ENCODE measurements at regions of chr14 and their contacts with region 1.

Region 1: DNA sequence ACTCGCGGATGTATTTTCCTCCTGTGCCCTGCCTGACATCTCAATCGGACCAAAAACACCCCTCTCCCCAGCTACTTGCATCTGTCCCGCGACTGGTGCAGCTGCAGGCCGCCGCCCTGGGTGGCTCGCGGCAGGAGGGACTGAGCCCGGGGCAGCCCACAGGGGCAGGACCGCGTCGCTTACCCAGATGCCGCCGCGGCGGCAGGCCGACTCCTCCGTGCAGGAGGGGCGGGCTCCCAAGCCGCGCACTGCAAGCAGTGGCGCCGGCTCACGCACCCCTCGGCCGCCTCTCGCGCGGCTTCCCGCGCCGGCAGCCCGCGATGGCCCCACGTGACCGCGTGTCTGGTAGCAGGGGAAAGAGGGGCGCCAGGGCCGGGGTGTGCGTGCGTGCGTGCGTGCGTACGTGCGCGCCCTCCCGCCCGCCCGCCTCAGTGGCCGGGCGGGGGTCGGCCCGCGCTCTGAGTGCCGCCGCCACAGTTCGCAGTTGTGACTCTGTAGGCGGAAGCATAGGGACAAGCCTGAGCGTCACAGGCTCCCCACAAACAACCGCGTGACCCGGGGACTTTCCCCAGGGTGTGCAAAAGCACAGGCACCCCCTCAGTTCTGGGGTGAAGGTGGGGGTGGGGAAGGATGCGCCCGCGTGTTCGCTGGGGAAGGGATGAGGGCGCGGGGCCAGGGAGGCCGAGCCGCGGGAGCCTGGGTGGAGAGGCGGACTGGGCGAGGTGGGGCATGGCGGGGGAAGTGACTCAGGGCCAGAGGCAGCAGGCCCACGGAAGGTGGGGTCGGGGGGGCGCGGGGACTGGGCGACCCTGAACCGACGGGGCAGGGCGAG is at the start of gene ZBTB25:
- DNase-seq: peak; percentile 91 to 100 (median 94)
- ATAC-seq: peak; percentile 64
- H3K4me3 ChIP-seq: peak within 1 kb of the TSS; percentile 96
- H3K4me3 Mint-ChIP-seq: peak within 1 kb of the TSS; percentile 100
- H3K27ac ChIP-seq: peak within 1 kb of the TSS; percentile 100
- H3K27ac Mint-ChIP-seq: peak within 1 kb of the TSS; percentile 100
- H3K4me1 ChIP-seq: peaks cover 60% of the 10 kb centered on the region
- H3K4me1 Mint-ChIP-seq: peaks cover 78% of the 10 kb centered on the region
- H3K27me3 ChIP-seq: no peaks in the 10 kb centered on the region
- H3K27me3 Mint-ChIP-seq: peaks cover 4% of the 10 kb centered on the region
- CTCF ChIP-seq: no peak
- total RNA-seq, gene ZBTB25: 56.8 to 58.1 TPM

Region 2: GRCh38 chr14:64338616-64339316 is 164.9 kb before region 1 on chr14:
- CTCF ChIA-PET with region 1: interaction called, 4 read pairs
- POLR2A ChIA-PET with region 1: interaction called, 22 read pairs
- intact Hi-C with region 1: no loop called
- DNase-seq: peak; percentile 58 to 95 (median 80)
- ATAC-seq: peak; percentile 79
- H3K4me3 ChIP-seq: peak overlapping the region; percentile 64
- H3K4me3 Mint-ChIP-seq: peak overlapping the region; percentile 97
- H3K27ac ChIP-seq: peak overlapping the region; percentile 57 to 64
- H3K27ac Mint-ChIP-seq: peak overlapping the region; percentile 84
- H3K4me1 ChIP-seq: peaks cover 13% of the 10 kb centered on the region
- H3K4me1 Mint-ChIP-seq: peaks cover 25% of the 10 kb centered on the region
- H3K27me3 ChIP-seq: no peaks in the 10 kb centered on the region
- H3K27me3 Mint-ChIP-seq: no peaks in the 10 kb centered on the region
- CTCF ChIP-seq: no peak

Region 3: GRCh38 chr14:64465191-64465822 is 38.4 kb before region 1 on chr14 and contains the start of gene AKAP5:
- CTCF ChIA-PET with region 1: no interaction called
- POLR2A ChIA-PET with region 1: interaction called, 16 read pairs
- intact Hi-C with region 1: no loop called
- DNase-seq: peak; percentile 31 to 86 (median 53)
- ATAC-seq: peak; percentile 95
- H3K4me3 ChIP-seq: peak within 1 kb of the TSS; percentile 70
- H3K4me3 Mint-ChIP-seq: peak within 1 kb of the TSS; percentile 93
- H3K27ac ChIP-seq: no peak within 1 kb of the TSS
- H3K27ac Mint-ChIP-seq: peak within 1 kb of the TSS; percentile 64
- H3K4me1 ChIP-seq: peaks cover 12% of the 10 kb centered on the region
- H3K4me1 Mint-ChIP-seq: peaks cover 50% of the 10 kb centered on the region
- H3K27me3 ChIP-seq: no peaks in the 10 kb centered on the region
- H3K27me3 Mint-ChIP-seq: no peaks in the 10 kb centered on the region
- CTCF ChIP-seq: no peak
- total RNA-seq, gene AKAP5: 0.49 to 0.50 TPM

Region 4: DNA sequence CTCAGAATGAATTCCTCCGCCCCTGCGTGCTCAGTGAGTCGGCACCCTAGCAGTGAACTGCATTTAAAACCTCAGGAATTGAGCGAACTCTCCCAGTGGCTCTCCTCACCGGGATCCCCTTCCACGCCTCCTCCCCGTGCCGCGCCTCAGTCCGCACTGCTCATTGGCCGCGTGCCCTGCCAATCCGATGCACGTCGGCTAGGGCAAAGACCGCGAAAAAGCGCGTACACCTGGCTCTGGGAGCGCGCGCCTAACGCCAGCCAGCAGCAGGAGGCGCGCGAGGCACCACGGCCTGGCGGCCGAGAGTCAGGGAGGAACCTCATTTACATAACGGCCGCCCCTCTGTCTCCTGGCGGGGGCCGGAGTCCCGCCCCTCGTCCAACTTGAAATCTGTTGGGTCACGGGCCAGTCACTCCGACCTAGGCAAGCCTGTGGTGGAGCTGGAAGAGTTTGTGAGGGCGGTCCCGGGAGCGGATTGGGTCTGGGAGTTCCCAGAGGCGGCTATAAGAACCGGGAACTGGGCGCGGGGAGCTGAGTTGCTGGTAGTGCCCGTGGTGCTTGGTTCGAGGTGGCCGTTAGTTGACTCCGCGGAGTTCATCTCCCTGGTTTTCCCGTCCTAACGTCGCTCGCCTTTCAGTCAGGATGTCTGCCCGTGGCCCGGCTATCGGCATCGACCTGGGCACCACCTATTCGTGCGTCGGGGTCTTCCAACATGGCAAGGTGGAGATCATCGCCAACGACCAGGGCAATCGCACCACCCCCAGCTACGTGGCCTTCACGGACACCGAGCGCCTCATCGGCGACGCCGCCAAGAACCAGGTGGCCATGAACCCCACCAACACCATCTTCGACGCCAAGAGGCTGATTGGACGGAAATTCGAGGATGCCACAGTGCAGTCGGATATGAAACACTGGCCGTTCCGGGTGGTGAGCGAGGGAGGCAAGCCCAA is 36.8 kb after region 1 on chr14 and contains the start of gene HSPA2:
- CTCF ChIA-PET with region 1: interaction called, 9 read pairs
- POLR2A ChIA-PET with region 1: interaction called, 67 read pairs
- intact Hi-C with region 1: loop called (anchors 2 kb)
- DNase-seq: peak; percentile 85 to 98 (median 92)
- ATAC-seq: peak; percentile 84
- H3K4me3 ChIP-seq: peak within 1 kb of the TSS; percentile 86
- H3K4me3 Mint-ChIP-seq: peak within 1 kb of the TSS; percentile 98
- H3K27ac ChIP-seq: no peak within 1 kb of the TSS
- H3K27ac Mint-ChIP-seq: peak within 1 kb of the TSS; percentile 78
- H3K4me1 ChIP-seq: peaks cover 41% of the 10 kb centered on the region
- H3K4me1 Mint-ChIP-seq: peaks cover 43% of the 10 kb centered on the region
- H3K27me3 ChIP-seq: no peaks in the 10 kb centered on the region
- H3K27me3 Mint-ChIP-seq: peaks cover 6% of the 10 kb centered on the region
- CTCF ChIP-seq: peak; percentile 72
- total RNA-seq, gene HSPA2: 1.5 to 1.9 TPM

Region 5: GRCh38 chr14:64764641-64765520 is 261.2 kb after region 1 on chr14:
- CTCF ChIA-PET with region 1: no interaction called
- POLR2A ChIA-PET with region 1: no interaction called
- intact Hi-C with region 1: no loop called
- DNase-seq: peak; percentile 44 to 86 (median 58)
- ATAC-seq: peak; percentile 76
- H3K4me3 ChIP-seq: peak overlapping the region; percentile 33
- H3K4me3 Mint-ChIP-seq: peak overlapping the region; percentile 67
- H3K27ac ChIP-seq: no peak overlapping the region
- H3K27ac Mint-ChIP-seq: no peak overlapping the region
- H3K4me1 ChIP-seq: peaks cover 61% of the 10 kb centered on the region
- H3K4me1 Mint-ChIP-seq: peaks cover 32% of the 10 kb centered on the region
- H3K27me3 ChIP-seq: no peaks in the 10 kb centered on the region
- H3K27me3 Mint-ChIP-seq: no peaks in the 10 kb centered on the region
- CTCF ChIP-seq: peak; percentile 85

Region 6: DNA sequence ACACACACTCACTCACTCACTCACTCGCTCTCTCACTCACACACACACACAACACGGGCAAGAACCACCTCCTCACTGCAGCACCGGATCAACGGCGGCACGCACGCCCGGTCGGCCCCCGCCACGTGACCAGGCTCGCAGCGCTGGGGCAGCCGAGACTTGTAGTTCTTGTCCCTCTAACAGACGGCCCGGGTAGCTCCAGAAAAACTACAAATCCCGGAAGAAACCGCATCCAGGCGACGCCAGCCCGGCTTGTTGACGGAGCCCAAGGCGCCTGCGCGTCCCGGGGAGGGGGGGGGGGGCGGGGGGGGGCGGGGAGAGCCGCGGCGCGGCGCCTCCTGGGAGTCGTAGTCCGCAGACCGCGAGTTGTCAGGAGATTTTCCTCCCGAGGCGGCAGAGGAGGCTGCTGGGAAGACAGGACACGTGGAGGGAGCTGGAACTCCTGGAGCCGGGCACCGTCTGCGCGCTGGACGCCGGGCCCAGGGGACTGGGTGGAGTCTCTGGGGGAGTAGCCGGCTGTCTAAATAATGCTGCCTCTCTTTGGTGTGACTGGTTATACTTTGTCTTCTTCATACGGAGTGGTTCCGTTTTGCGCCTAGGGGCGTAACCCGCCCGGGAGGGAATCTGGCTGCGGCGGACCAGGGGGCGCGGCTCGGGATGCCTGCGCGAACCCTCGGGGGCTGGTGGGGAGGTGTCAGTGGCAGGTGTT is 598.9 kb after region 1 on chr14 and contains the start of gene MAX:
- CTCF ChIA-PET with region 1: no interaction called
- POLR2A ChIA-PET with region 1: interaction called, 3 read pairs
- intact Hi-C with region 1: loop called (anchors 5 kb)
- DNase-seq: peak; percentile 96 to 100 (median 98)
- ATAC-seq: peak; percentile 89
- H3K4me3 ChIP-seq: peak within 1 kb of the TSS; percentile 98
- H3K4me3 Mint-ChIP-seq: peak within 1 kb of the TSS; percentile 91
- H3K27ac ChIP-seq: peak within 1 kb of the TSS; percentile 98 to 100
- H3K27ac Mint-ChIP-seq: peak within 1 kb of the TSS; percentile 90
- H3K4me1 ChIP-seq: peaks cover 21% of the 10 kb centered on the region
- H3K4me1 Mint-ChIP-seq: peaks cover 44% of the 10 kb centered on the region
- H3K27me3 ChIP-seq: no peaks in the 10 kb centered on the region
- H3K27me3 Mint-ChIP-seq: peaks cover 4% of the 10 kb centered on the region
- CTCF ChIP-seq: no peak
- total RNA-seq, gene MAX: 159 to 171 TPM